Panc1 (cell line): ENCODE measurements at regions of chr17 and their contacts with region 1.

Region 1: GRCh38 chr17:82273327-82274133 is at the start of gene CSNK1D:
- DNase-seq: no peak
- ATAC-seq: peak; percentile 93
- H3K4me3 ChIP-seq: peak within 1 kb of the TSS; percentile 66 to 80
- H3K27ac ChIP-seq: peak within 1 kb of the TSS; percentile 90
- H3K4me1 ChIP-seq: peaks cover 53% of the 10 kb centered on the region
- H3K27me3 ChIP-seq: no peaks in the 10 kb centered on the region
- CTCF ChIP-seq: no peak
- total RNA-seq, gene CSNK1D: 234 TPM

Region 2: DNA sequence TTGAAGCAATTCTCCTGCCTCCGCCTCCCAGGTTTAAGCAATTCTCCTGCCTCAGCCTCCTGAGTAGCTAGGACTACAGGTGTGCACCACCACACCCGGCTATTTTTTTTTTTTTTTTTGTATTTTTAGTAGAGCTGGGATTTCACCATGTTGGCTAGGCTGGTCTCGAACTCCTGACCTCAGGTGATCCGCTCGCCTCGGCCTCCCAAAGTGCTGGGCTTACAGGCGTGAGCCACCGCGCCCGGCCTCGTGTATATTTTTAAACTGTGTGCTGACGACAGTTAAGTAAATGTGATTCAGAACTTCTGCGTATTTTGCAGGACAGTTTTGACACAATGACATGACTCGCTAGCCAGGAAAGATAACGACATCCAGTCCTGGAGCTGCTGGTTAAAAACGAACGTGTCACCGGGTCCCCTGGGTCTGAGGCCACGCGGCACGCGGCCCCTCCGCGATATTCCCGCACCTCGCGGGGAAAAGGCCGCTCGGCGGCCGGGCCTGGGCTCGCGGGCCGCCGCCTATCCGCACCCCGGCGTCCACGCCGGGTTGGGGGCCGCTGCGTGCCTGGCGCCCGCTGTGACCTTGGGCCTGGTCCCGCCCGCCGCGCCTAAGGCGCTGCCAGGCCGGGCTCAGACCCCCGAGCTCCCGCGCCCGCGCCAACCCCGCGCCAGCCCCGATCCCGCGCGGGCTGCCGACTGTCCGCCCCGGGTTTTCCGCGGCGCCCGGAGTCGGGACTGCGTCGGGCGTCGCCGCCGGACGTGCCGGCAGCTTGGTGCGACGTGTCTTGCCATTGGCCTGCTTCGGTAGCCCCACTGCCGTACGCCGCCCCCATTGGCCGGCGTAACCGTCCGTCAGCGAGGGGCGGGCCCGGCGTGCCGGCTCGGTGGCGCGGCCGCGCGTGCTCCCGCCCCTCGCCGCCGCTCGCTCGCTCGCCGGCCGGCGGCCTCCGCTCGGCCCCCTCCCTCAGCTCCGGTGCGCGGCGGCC is 245.6 kb after region 1 on chr17 and contains the start of gene FOXK2:
- CTCF ChIA-PET with region 1: interaction called, 11 read pairs
- POLR2A ChIA-PET with region 1: no interaction called
- in situ Hi-C with region 1: no loop called
- intact Hi-C with region 1: no loop called
- DNase-seq: no peak
- ATAC-seq: peak; percentile 99
- H3K4me3 ChIP-seq: peak within 1 kb of the TSS; percentile 68 to 87
- H3K27ac ChIP-seq: peak within 1 kb of the TSS; percentile 89
- H3K4me1 ChIP-seq: peaks cover 6% of the 10 kb centered on the region; the same call in 1 of the 2 replicates
- H3K27me3 ChIP-seq: no peaks in the 10 kb centered on the region
- CTCF ChIP-seq: no peak
- total RNA-seq, gene FOXK2: 143 TPM

Region 3: DNA sequence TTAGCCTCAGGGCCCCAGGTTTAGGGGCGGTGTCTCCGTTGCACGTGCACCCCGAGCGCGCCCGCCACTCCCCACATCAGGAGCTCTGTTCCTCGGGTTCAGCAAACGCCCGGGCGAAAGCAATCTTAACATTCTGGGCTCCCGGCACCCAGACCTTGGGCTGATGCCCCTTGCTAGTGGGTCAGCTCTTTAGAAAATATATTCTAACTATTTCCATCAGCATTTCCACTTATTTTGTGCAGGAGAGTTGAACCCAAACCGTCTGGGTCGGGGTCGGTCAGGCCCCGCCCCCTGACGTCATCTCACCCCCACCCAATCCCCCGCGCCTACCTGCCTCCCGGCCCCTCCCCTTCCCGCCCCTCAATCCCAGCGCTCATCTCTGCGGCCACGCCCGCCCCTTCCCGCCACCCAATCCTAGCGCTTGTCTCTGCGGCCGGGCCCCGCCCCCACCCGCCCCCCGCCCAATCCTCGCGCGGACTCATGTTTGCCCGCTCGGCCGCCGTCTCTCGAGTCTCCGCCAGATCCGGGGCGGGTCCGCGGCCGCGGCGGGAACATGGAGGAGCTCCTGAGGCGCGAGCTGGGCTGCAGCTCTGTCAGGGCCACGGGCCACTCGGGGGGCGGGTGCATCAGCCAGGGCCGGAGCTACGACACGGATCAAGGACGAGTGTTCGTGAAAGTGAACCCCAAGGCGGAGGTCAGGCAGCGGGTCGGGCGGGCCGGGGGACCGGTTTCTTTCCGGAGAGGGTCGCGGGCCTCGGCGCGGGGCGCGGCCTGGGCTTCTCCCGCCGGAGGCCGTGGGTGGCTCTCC is 442.9 kb after region 1 on chr17 and contains the start of gene FN3KRP:
- CTCF ChIA-PET with region 1: no interaction called
- POLR2A ChIA-PET with region 1: no interaction called
- in situ Hi-C with region 1: no loop called
- intact Hi-C with region 1: no loop called
- DNase-seq: peak; percentile 55
- ATAC-seq: peak; percentile 93
- H3K4me3 ChIP-seq: peak within 1 kb of the TSS; percentile 79 to 91
- H3K27ac ChIP-seq: peak within 1 kb of the TSS; percentile 74
- H3K4me1 ChIP-seq: peaks cover 3% of the 10 kb centered on the region; the same call in 1 of the 2 replicates
- H3K27me3 ChIP-seq: no peaks in the 10 kb centered on the region
- CTCF ChIP-seq: no peak
- total RNA-seq, gene FN3KRP: 41.0 TPM

Region 4: DNA sequence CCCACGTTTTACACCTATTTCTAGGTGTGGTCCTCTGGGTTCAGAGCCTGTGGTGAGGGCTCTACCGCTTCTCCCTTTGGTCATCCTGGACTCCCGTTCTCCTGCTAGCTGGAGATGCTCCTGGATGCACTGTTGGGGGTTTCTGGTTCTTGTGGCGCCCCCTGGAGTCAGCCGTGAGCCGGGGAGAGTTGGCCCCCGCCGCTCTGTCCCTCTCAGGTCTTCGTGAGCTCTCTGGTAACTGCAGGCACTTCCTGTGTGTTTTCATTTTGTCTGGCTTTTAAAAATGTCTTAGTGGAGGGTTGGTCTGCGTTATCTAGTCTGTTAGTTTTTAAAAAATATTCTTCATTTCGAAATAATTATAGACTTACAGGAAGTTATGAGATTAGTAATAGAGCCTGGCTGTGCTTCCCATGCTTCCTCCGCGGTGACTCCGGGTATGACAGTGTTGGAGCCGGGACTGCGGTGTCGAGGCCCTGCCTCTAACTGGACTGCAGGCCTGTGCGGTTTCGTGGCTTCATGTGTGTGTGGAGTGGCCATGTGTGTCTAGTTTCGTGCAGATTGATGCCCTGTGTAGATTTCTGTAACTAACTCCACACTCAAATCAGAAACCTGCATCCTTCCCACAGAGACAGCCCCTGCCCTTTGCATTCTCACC is 644.3 kb after region 1 on chr17:
- CTCF ChIA-PET with region 1: no interaction called
- POLR2A ChIA-PET with region 1: no interaction called
- in situ Hi-C with region 1: no loop called
- intact Hi-C with region 1: no loop called
- DNase-seq: no peak
- ATAC-seq: 0 out of 2 replicates have a peak, but pooled peaks have one; percentile 39
- H3K4me3 ChIP-seq: no peak overlapping the region
- H3K27ac ChIP-seq: no peak overlapping the region
- H3K4me1 ChIP-seq: no peaks in the 10 kb centered on the region
- H3K27me3 ChIP-seq: no peaks in the 10 kb centered on the region
- CTCF ChIP-seq: no peak; the same call in 1 of the 2 replicates